ENCODE measurements at regions of chr11 and their contacts with region 1.

Region 1: GRCh38 chr11:61509043-61510029 is 787 bp downstream of the LRRC10B start:
- DNase-seq: peak; percentile 97
- H3K4me3 ChIP-seq: peak overlapping the region; percentile 53
- H3K27ac ChIP-seq: peak overlapping the region; percentile 80
- H3K4me1 ChIP-seq: peaks cover 81% of the 10 kb centered on the region
- H3K27me3 ChIP-seq: no peaks in the 10 kb centered on the region
- CTCF ChIP-seq: peak; percentile 77

Region 2: DNA sequence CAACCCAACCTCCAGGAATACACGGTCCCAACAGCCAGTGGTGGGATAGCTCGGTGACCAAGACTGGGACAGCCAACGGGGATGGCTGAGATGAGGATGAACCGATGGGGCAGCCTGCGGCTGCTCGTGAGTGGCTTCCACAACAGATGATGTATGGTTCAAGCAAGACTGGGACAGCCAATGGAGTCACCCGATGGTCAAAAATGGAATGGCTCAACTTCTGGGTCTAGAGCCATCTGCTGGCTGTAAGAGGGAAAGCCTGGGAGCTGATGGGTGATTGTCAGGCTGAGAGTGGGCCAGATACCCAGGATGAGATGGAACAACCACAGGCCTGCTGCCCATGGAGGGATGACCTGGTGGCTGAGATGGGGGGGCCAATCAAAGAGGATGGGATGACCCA is 36.0 kb after region 1 on chr11:
- CTCF ChIA-PET with region 1: no interaction called
- POLR2A ChIA-PET with region 1: interaction called, 10 read pairs
- intact Hi-C with region 1: no loop called
- DNase-seq: peak; percentile 35
- H3K4me3 ChIP-seq: no peak overlapping the region
- H3K27ac ChIP-seq: no peak overlapping the region
- H3K4me1 ChIP-seq: no peaks in the 10 kb centered on the region
- H3K27me3 ChIP-seq: no peaks in the 10 kb centered on the region
- CTCF ChIP-seq: peak; percentile 60

Region 3: DNA sequence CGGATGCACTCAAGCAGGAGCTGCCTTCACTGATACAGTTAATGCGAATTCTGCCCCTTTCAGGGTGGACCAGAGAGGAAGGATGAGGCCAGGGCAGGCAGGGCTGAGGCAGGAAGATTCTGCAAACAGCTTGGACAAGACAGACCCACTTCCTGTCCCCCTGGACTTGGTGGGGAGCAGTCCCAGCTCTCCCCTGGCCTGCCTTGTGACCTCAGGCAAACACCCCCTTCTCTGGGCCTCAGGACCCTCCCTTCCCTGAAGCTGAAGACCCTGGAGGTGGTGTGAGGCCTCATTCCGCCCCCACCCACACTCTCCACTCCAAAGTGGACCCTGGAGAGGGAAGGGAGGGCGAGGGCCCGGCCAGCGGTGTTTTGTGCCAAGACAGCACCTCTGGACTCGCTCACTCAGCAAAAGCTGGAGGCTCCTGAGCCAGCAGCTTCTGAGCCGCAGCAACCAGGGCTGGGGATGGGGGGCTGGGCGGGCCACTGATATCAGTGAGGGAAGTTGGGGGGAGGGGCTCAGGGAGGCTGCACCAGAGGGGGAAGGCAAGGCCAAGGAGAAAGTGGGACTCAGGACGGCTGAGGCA is 399.5 kb after region 1 on chr11:
- CTCF ChIA-PET with region 1: no interaction called
- POLR2A ChIA-PET with region 1: no interaction called
- intact Hi-C with region 1: no loop called
- DNase-seq: no peak
- H3K4me3 ChIP-seq: no peak overlapping the region
- H3K27ac ChIP-seq: no peak overlapping the region
- H3K4me1 ChIP-seq: no peaks in the 10 kb centered on the region
- H3K27me3 ChIP-seq: no peaks in the 10 kb centered on the region
- CTCF ChIP-seq: no peak